Heart right ventricle (tissue), 16 donors: ENCODE measurements at regions of chr3 and their contacts with region 1.

Region 1: DNA sequence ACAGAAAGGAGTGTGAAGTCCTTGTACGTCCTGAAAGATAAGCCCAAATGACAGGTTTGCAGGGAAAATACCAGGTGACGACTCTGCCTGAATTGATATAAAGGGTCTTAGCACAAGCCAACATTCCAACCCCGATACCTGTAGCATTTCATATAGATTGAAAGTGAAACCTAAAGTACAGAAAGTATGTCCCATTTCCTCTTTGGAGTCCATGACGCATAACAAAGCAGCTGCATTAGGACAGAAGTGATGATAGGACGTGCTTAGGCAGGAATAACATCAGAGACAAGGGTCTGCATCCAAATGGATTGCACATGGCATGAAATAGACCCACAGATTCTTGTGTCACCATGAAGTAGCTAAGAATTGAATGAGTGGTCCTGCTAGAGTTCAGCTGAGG is 187.0 kb upstream of the ROBO1 start:
- DNase-seq: no peak
- ATAC-seq: no peak
- H3K4me3 ChIP-seq: no peak overlapping the region
- H3K27ac ChIP-seq: no peak overlapping the region
- H3K4me1 ChIP-seq: no peaks in the 10 kb centered on the region
- H3K27me3 ChIP-seq: no peaks in the 10 kb centered on the region
- CTCF ChIP-seq: no peak

Region 2: GRCh38 chr3:79461129-79461792 is 493.5 kb before region 1 on chr3:
- intact Hi-C with region 1: no loop called
- DNase-seq: no peak
- ATAC-seq: no peak
- H3K4me3 ChIP-seq: no peak overlapping the region
- H3K27ac ChIP-seq: no peak overlapping the region
- H3K4me1 ChIP-seq: no peaks in the 10 kb centered on the region
- H3K27me3 ChIP-seq: no peaks in the 10 kb centered on the region
- CTCF ChIP-seq: no peak

Region 3: GRCh38 chr3:81033684-81034083 is 1078.9 kb after region 1 on chr3:
- intact Hi-C with region 1: loop called in 1 of 10 experiments (anchors 10 kb)
- DNase-seq: no peak
- ATAC-seq: no peak
- H3K4me3 ChIP-seq: no peak overlapping the region
- H3K27ac ChIP-seq: no peak overlapping the region
- H3K4me1 ChIP-seq: no peaks in the 10 kb centered on the region
- H3K27me3 ChIP-seq: no peaks in the 10 kb centered on the region
- CTCF ChIP-seq: no peak